HepG2 (cell line): ENCODE measurements at regions of chr18 and their contacts with region 1.

Region 1: GRCh38 chr18:42168487-42168886 is 213.5 kb downstream of the PIK3C3 start:
- DNase-seq: peak; percentile 86
- ATAC-seq: peak; percentile 95
- H3K4me3 ChIP-seq: no peak overlapping the region
- H3K27ac ChIP-seq: peak overlapping the region; percentile 79
- H3K4me1 ChIP-seq: peaks cover 45% of the 10 kb centered on the region
- H3K27me3 ChIP-seq: no peaks in the 10 kb centered on the region; a peak in 1 of 5 replicates
- CTCF ChIP-seq: no peak
- EP300 ChIP-seq: peak; percentile 75 to 90; a peak in 3 of 4 replicates
- POLR2A ChIP-seq: no peak
- RAD21 ChIP-seq: no peak

Region 2: DNA sequence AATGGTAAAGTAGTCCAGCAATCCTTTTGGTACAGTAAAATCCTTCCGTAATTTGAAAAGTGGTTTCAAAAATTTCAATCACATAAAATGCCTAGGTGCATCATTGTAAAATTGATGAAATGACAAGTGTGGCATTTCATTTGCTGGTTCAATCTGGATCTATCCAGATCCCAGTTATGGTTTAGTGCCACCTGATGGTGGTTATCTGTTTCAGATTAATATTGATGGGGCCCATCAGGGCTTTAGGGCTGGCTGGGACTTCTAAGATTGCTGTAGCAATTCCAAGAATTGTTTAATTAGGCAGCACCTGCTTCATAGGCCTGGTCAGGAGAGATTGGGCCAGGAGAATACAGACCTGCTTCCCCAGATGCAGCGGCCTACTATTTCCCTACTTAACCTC is 269.0 kb before region 1 on chr18:
- CTCF ChIA-PET with region 1: no interaction called
- POLR2A ChIA-PET with region 1: no interaction called
- in situ Hi-C with region 1: no loop called
- intact Hi-C with region 1: no loop called
- DNase-seq: no peak
- ATAC-seq: no peak
- H3K4me3 ChIP-seq: no peak overlapping the region
- H3K27ac ChIP-seq: no peak overlapping the region
- H3K4me1 ChIP-seq: no peaks in the 10 kb centered on the region
- H3K27me3 ChIP-seq: no peaks in the 10 kb centered on the region; a peak in 1 of 5 replicates
- CTCF ChIP-seq: no peak
- EP300 ChIP-seq: no peak
- POLR2A ChIP-seq: no peak
- RAD21 ChIP-seq: no peak

Region 3: GRCh38 chr18:42242758-42243157 is 74.3 kb after region 1 on chr18:
- CTCF ChIA-PET with region 1: no interaction called
- POLR2A ChIA-PET with region 1: no interaction called
- in situ Hi-C with region 1: no loop called
- intact Hi-C with region 1: loop called (anchors 2 kb)
- DNase-seq: peak; percentile 60
- ATAC-seq: peak; percentile 88
- H3K4me3 ChIP-seq: no peak overlapping the region
- H3K27ac ChIP-seq: peak overlapping the region; percentile 74
- H3K4me1 ChIP-seq: peaks cover 53% of the 10 kb centered on the region
- H3K27me3 ChIP-seq: no peaks in the 10 kb centered on the region
- CTCF ChIP-seq: no peak
- EP300 ChIP-seq: peak in 1 of 2 experiments; percentile 35; a peak in 1 of 4 replicates
- POLR2A ChIP-seq: no peak
- RAD21 ChIP-seq: no peak